WTC11 (cell line): ENCODE measurements at regions of chr1 and their contacts with region 1.

Region 1: GRCh38 chr1:43414634-43415223 is 25.0 kb downstream of the SZT2 start:
- DNase-seq: peak; percentile 81
- ATAC-seq: peak; percentile 98
- H3K4me3 Mint-ChIP-seq: no peak overlapping the region
- H3K27ac Mint-ChIP-seq: no peak overlapping the region
- H3K4me1 Mint-ChIP-seq: no peaks in the 10 kb centered on the region
- H3K27me3 Mint-ChIP-seq: no peaks in the 10 kb centered on the region
- CTCF ChIP-seq: peak; percentile 58

Region 2: GRCh38 chr1:42913426-42914091 is 501.2 kb before region 1 on chr1:
- CTCF ChIA-PET with region 1: interaction called, 10 read pairs
- POLR2A ChIA-PET with region 1: no interaction called
- DNase-seq: peak; percentile 53
- ATAC-seq: peak; percentile 94
- H3K4me3 Mint-ChIP-seq: no peak overlapping the region
- H3K27ac Mint-ChIP-seq: no peak overlapping the region
- H3K4me1 Mint-ChIP-seq: no peaks in the 10 kb centered on the region; the same call in 1 of the 2 replicates
- H3K27me3 Mint-ChIP-seq: peaks cover 7% of the 10 kb centered on the region
- CTCF ChIP-seq: peak; percentile 72

Region 3: GRCh38 chr1:43227143-43227764 is 187.5 kb before region 1 on chr1:
- CTCF ChIA-PET with region 1: interaction called, 100 read pairs
- POLR2A ChIA-PET with region 1: no interaction called
- DNase-seq: peak; percentile 96
- ATAC-seq: peak; percentile 96
- H3K4me3 Mint-ChIP-seq: no peak overlapping the region
- H3K27ac Mint-ChIP-seq: no peak overlapping the region
- H3K4me1 Mint-ChIP-seq: peaks cover 20% of the 10 kb centered on the region
- H3K27me3 Mint-ChIP-seq: peaks cover 3% of the 10 kb centered on the region; the same call in 1 of the 2 replicates
- CTCF ChIP-seq: peak; percentile 93

Region 4: DNA sequence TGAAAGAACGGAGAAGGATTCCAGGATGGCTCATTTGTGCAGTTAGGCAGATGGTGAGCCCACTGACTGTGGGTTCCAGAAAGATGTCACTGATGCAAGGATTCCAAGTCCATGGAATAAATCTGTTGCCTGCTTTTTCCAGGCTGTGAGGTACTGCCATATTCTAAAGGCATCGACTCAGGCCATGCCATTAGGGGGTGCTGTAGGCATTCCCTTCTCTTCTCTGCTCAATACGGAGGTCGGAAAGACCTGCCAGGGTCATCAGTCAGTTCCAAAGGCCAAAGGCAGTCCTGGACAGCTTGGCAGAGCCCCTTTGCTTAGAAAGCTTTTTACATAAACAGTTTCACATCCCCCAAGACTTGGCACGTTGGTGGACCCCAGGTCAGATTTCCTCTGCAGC is 176.6 kb before region 1 on chr1:
- CTCF ChIA-PET with region 1: interaction called, 40 read pairs
- POLR2A ChIA-PET with region 1: no interaction called
- DNase-seq: peak; percentile 79
- ATAC-seq: peak; percentile 96
- H3K4me3 Mint-ChIP-seq: no peak overlapping the region
- H3K27ac Mint-ChIP-seq: no peak overlapping the region
- H3K4me1 Mint-ChIP-seq: no peaks in the 10 kb centered on the region
- H3K27me3 Mint-ChIP-seq: peaks cover 7% of the 10 kb centered on the region
- CTCF ChIP-seq: peak; percentile 50

Region 5: DNA sequence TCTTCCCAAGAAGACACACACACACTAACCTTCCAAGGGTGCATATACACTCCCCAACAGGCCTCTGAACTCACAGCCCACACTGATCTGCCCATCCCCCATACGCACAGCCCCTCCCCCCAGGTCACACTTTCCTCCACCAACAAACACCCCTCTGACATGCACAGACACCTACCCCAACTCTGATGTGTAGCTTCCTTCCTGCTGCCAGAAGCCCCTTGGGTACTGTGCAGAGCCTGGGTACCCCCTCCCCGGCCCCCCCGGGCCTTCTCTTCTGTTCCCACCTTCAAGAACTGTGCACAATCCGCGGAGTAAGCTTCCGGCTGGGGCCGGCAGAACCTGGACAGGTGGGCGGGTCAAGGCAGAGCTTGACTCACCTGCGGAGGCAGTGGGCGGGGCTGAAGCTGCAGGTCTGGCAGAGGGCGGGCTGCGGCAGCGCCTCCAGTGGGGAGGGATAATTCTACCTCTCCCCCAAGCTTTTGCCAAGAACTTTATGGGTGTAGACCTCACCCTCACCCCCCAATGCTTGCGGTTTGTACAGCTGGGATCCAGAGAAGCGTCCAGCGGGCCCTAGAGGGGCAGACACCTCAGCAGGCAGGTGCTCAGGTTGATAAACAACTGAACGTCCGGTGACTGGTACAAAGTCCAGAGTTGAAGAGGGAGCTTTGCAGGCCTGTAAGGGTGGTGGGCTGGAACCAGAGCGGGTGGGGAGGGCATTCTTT is 129.3 kb before region 1 on chr1 and contains the start of gene C1orf210:
- CTCF ChIA-PET with region 1: interaction called, 15 read pairs
- POLR2A ChIA-PET with region 1: no interaction called
- DNase-seq: peak; percentile 98
- ATAC-seq: peak; percentile 97
- H3K4me3 Mint-ChIP-seq: peak within 1 kb of the TSS; percentile 79
- H3K27ac Mint-ChIP-seq: peak within 1 kb of the TSS; percentile 94
- H3K4me1 Mint-ChIP-seq: peaks cover 34% of the 10 kb centered on the region
- H3K27me3 Mint-ChIP-seq: no peaks in the 10 kb centered on the region
- CTCF ChIP-seq: peak; percentile 39
- total RNA-seq, gene C1orf210: 11.7 to 14.0 TPM (median 12.8 TPM) in 3 replicates

Region 6: GRCh38 chr1:43348809-43349583 is 65.7 kb before region 1 on chr1:
- CTCF ChIA-PET with region 1: interaction called, 12 read pairs
- POLR2A ChIA-PET with region 1: no interaction called
- DNase-seq: peak; percentile 97
- ATAC-seq: peak; percentile 89
- H3K4me3 Mint-ChIP-seq: peak overlapping the region; percentile 72
- H3K27ac Mint-ChIP-seq: peak overlapping the region; percentile 95
- H3K4me1 Mint-ChIP-seq: peaks cover 25% of the 10 kb centered on the region
- H3K27me3 Mint-ChIP-seq: peaks cover 16% of the 10 kb centered on the region
- CTCF ChIP-seq: no peak

Region 7: GRCh38 chr1:43367904-43368645 is 46.7 kb before region 1 on chr1 and contains the start of gene ELOVL1:
- CTCF ChIA-PET with region 1: interaction called, 10 read pairs
- POLR2A ChIA-PET with region 1: no interaction called
- DNase-seq: peak; percentile 90
- ATAC-seq: peak; percentile 74
- H3K4me3 Mint-ChIP-seq: peak within 1 kb of the TSS; percentile 81
- H3K27ac Mint-ChIP-seq: peak within 1 kb of the TSS; percentile 97
- H3K4me1 Mint-ChIP-seq: peaks cover 23% of the 10 kb centered on the region
- H3K27me3 Mint-ChIP-seq: no peaks in the 10 kb centered on the region
- CTCF ChIP-seq: no peak
- total RNA-seq, gene ELOVL1: 22.6 to 26.6 TPM (median 24.1 TPM) in 3 replicates

Region 8: GRCh38 chr1:43529206-43529731 is 114.5 kb after region 1 on chr1:
- CTCF ChIA-PET with region 1: no interaction called
- POLR2A ChIA-PET with region 1: no interaction called
- DNase-seq: peak; percentile 89
- ATAC-seq: peak; percentile 45
- H3K4me3 Mint-ChIP-seq: peak overlapping the region; percentile 91
- H3K27ac Mint-ChIP-seq: no peak overlapping the region
- H3K4me1 Mint-ChIP-seq: peaks cover 36% of the 10 kb centered on the region
- H3K27me3 Mint-ChIP-seq: peaks cover 10% of the 10 kb centered on the region
- CTCF ChIP-seq: peak; percentile 85

Region 9: GRCh38 chr1:43974443-43975248 is 559.9 kb after region 1 on chr1 and contains the start of gene ATP6V0B:
- CTCF ChIA-PET with region 1: no interaction called
- POLR2A ChIA-PET with region 1: no interaction called
- DNase-seq: peak; percentile 96
- ATAC-seq: peak; percentile 70
- H3K4me3 Mint-ChIP-seq: peak within 1 kb of the TSS; percentile 89
- H3K27ac Mint-ChIP-seq: peak within 1 kb of the TSS; percentile 93
- H3K4me1 Mint-ChIP-seq: peaks cover 43% of the 10 kb centered on the region
- H3K27me3 Mint-ChIP-seq: no peaks in the 10 kb centered on the region
- CTCF ChIP-seq: no peak
- total RNA-seq, gene ATP6V0B: 108 to 115 TPM (median 110 TPM) in 3 replicates